ENCODE measurements at regions of chr7 and their contacts with region 1.

Region 1: GRCh38 chr7:130069978-130070860 is at the start of gene KLHDC10:
- DNase-seq: peak; percentile 83
- ATAC-seq: peak; percentile 92
- H3K4me3 Mint-ChIP-seq: peak within 1 kb of the TSS; percentile 93
- H3K27ac Mint-ChIP-seq: peak within 1 kb of the TSS; percentile 90
- H3K4me1 Mint-ChIP-seq: peaks cover 44% of the 10 kb centered on the region
- H3K27me3 Mint-ChIP-seq: no peaks in the 10 kb centered on the region
- CTCF ChIP-seq: no peak
- total RNA-seq, gene KLHDC10: 17.2 and 21.0 TPM in 2 replicates

Region 2: DNA sequence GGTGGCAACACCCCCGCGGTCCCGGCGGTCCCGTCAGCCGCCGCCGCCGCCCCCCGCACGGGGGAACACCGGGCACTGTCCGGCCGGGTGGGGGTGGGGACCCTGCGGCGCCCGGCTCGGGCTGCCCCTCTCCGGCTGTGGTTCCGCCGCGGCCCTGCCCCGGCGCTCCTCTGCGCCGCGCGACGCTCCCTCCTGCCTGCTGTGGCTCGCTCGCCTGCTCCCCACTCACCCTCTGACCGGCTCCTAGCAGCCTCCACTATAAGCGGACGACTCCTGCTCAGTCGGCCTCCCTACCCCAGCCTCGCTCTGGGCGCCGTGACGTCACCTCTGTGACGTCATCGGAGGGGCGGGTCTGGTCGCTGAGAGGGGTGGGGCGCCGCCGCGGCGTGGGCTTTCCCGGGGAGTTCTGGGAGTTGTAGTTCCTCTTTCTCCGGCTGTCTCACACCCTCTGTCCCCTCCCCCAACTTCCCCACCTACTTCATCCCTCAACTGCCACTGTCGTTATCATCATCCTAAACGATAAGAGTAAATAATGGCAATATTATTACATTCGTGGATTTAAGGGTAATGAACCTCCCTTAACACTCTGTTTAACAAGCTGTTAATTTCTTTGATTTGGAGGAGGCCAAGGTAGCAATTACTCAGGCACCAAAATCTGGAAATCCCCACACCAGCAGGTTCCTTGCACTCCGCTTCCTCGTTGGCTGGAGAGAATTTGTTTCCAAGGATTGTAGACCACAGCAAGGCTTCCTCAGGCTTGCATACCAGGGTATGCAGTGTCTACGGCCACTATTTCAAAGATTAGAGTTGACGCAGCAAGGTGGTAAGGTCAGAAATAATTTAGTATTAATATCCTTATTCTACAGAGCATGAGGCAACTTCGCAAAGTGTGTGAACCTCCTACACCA is 117.3 kb before region 1 on chr7 and contains the start of gene UBE2H:
- CTCF ChIA-PET with region 1: no interaction called
- POLR2A ChIA-PET with region 1: no interaction called
- intact Hi-C with region 1: loop called (anchors 1 kb)
- DNase-seq: peak; percentile 89
- ATAC-seq: peak; percentile 73
- H3K4me3 Mint-ChIP-seq: peak within 1 kb of the TSS; percentile 98
- H3K27ac Mint-ChIP-seq: peak within 1 kb of the TSS; percentile 98
- H3K4me1 Mint-ChIP-seq: peaks cover 10% of the 10 kb centered on the region
- H3K27me3 Mint-ChIP-seq: no peaks in the 10 kb centered on the region
- CTCF ChIP-seq: no peak
- total RNA-seq, gene UBE2H: 28.8 and 32.6 TPM in 2 replicates

Region 3: DNA sequence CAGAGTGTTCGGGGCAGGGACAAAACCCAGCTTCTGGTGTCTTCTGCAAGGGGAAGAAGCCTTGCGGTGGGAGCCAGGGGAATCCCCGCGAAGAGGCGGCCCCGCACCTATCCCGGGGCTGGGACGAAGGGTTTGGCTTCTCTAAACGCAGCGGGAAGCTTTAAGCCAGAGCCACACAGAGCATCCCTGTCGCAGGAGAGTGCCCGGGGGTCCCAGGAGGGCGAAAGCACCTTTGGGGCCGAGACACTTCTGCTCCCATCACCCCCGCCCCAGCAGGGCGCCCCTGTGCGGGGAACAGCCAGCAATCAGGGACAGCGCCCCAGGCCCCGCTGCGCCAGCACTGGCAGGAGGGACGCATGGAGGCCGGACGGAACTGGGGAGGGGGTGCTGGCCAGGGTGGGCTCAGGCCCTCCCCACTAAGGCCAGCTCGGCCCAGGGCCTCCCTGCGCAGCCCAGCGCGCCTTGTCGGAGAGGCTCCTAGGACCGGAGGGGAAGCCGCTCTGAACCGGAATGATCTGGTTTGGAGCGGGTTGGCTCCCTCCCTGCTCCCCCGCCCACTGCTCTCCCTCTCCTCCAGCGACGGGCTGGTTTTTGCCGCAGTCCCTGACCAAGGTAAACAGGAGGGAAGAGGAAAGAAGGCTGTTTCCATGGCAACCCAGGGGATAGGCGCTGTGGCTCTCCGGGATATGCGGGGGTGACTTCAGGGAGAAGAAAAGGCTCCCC is 71.1 kb after region 1 on chr7:
- CTCF ChIA-PET with region 1: interaction called, 4 read pairs
- POLR2A ChIA-PET with region 1: interaction called, 9 read pairs
- intact Hi-C with region 1: loop called (anchors 2 kb)
- DNase-seq: peak; percentile 51
- ATAC-seq: peak; percentile 83
- H3K4me3 Mint-ChIP-seq: peak overlapping the region; percentile 87
- H3K27ac Mint-ChIP-seq: peak overlapping the region; percentile 94
- H3K4me1 Mint-ChIP-seq: peaks cover 44% of the 10 kb centered on the region
- H3K27me3 Mint-ChIP-seq: no peaks in the 10 kb centered on the region
- CTCF ChIP-seq: no peak

Region 4: DNA sequence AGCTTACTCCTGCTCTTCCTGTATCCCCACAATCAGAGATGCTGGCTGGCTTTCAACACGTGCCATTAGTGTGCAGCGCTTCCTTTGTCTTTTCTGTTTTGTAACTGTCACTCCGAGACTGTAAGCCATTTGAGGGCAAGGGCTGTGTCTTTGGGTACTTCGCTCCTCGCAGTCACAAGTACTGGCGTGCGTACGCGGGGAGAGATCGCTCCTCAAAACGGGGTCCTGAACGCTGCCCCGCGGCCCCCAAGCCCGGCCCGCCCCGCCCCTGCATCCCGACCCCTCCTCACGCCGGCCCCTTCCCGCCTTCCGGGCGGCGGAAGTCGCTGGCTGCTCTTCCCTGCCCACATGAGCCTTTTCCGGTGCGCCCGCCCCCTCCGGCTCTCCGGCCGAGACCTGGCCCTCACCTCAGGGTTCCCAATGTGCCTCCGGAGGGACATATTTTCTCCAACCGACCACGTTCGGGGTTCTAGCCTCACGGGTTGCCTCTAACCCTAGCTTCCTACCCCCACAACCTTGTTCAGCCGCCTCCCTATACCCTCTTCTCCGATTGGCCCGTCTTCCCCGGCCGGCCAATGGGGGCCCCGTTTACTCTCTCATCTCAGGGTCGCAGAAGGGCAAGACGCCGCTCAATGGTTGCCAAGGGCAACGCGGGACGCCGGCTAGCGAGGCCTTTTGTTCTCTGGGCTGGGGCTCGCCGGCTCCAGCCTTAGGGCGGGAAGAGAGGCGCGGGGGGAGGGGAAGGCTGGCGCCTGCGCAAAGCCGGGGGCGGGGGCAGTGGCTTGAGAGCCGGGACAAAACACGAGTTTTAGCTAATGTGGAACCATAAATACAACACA is 370.5 kb after region 1 on chr7 and contains the start of gene CEP41:
- CTCF ChIA-PET with region 1: no interaction called
- POLR2A ChIA-PET with region 1: no interaction called
- intact Hi-C with region 1: loop called (anchors 1 kb)
- DNase-seq: peak; percentile 89
- ATAC-seq: peak; percentile 97
- H3K4me3 Mint-ChIP-seq: peak within 1 kb of the TSS; percentile 99
- H3K27ac Mint-ChIP-seq: peak within 1 kb of the TSS; percentile 95
- H3K4me1 Mint-ChIP-seq: peaks cover 14% of the 10 kb centered on the region
- H3K27me3 Mint-ChIP-seq: peaks cover 5% of the 10 kb centered on the region
- CTCF ChIP-seq: no peak
- total RNA-seq, gene CEP41: 5.1 and 6.6 TPM in 2 replicates

Region 5: GRCh38 chr7:130668257-130669084 is 598.3 kb after region 1 on chr7 and contains the start of gene COPG2:
- CTCF ChIA-PET with region 1: interaction called, 3 read pairs
- POLR2A ChIA-PET with region 1: no interaction called
- intact Hi-C with region 1: loop called (anchors 1 kb)
- DNase-seq: peak; percentile 87
- ATAC-seq: peak; percentile 93
- H3K4me3 Mint-ChIP-seq: peak within 1 kb of the TSS; percentile 89
- H3K27ac Mint-ChIP-seq: peak within 1 kb of the TSS; percentile 75
- H3K4me1 Mint-ChIP-seq: peaks cover 11% of the 10 kb centered on the region
- H3K27me3 Mint-ChIP-seq: peaks cover 3% of the 10 kb centered on the region
- CTCF ChIP-seq: no peak
- total RNA-seq, gene COPG2: 15.3 and 15.4 TPM in 2 replicates

Region 6: DNA sequence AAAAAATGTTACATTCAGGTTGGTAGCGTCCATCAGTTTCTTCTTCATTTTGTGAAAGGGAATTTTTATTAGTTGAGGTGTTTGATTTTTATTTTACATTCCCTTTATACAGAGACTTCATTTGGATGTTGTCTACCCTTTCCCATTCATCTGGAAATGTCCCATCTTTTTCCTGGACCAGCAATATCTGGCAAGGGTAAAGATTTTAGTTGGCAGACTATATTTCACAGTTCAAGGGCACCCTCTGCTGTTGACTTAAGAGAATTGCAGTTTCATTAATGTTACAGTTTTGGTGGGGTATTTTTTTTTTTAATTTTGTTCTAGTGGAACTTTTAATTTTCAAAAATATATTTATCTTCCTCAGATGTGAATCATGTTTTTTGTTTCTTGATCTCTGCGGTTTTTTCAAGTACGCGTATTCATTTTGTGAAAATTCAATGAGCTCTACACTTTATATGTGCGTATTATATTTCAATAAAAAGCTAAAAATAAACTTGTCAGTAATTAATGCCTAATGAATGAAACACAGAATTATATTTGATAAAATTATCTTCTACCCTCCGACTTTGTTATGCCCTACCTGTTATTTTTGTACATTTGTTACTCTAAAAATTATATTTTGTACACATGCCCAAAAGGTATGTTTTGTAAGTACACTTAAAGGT is 761.7 kb after region 1 on chr7:
- CTCF ChIA-PET with region 1: interaction called, 23 read pairs
- POLR2A ChIA-PET with region 1: no interaction called
- intact Hi-C with region 1: loop called (anchors 1 kb)
- DNase-seq: no peak
- ATAC-seq: no peak
- H3K4me3 Mint-ChIP-seq: no peak overlapping the region
- H3K27ac Mint-ChIP-seq: no peak overlapping the region
- H3K4me1 Mint-ChIP-seq: no peaks in the 10 kb centered on the region
- H3K27me3 Mint-ChIP-seq: peaks cover 8% of the 10 kb centered on the region
- CTCF ChIP-seq: peak; percentile 79